Calu3 (cell line): ENCODE measurements at regions of chr5 and their contacts with region 1.

Region 1: GRCh38 chr5:175700991-175701390 is 43.1 kb downstream of the HRH2 start:
- DNase-seq: peak; percentile 30
- H3K4me3 Mint-ChIP-seq: no peak overlapping the region
- H3K27ac Mint-ChIP-seq: no peak overlapping the region
- H3K4me1 Mint-ChIP-seq: no peaks in the 10 kb centered on the region
- H3K27me3 Mint-ChIP-seq: peaks cover 70% of the 10 kb centered on the region
- CTCF ChIP-seq: no peak

Region 2: DNA sequence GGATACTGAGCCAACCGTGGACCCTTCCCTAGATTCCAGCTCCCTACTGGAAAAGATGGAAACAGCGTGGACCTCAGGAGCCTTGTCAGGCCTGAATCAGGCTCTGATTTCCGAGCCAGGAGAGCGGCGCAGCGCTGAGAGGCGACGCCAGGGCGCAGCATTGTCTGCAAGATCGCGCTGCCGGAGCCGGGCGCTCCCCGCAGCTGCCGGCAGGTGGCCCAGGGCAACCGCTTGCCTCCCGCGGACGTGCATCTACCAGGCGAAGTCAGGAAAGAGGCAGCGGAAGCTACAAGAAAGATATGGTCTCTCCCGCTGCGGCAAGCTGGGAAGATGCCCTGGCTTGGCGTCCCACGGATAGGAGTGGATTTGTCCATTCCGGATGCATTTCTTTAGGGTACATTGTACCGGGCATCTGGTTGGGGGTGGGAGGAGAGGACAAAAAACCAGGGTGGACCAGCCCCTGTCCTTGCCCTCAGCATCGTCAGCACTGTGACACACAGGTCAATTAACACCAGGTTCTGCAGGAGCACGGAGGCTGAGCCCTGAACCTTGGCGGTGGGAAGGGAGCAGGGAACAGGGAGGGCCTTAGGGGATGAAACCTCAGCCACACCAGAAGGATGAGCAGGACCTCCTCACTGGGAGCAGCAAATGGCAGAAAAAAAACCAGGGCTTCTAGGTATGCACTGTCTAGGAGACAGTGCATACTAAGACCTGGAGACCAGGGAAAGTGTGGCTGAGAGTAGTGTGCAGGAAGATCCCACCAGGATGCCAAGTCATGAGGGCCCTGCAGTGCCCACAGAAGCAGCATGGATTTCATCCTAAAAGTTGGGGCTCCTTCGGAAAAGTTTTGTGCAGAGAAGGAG is 166.7 kb before region 1 on chr5:
- CTCF ChIA-PET with region 1: interaction called, 9 read pairs
- intact Hi-C with region 1: loop called (anchors 5 kb)
- DNase-seq: peak; percentile 88
- H3K4me3 Mint-ChIP-seq: peak overlapping the region; percentile 30
- H3K27ac Mint-ChIP-seq: no peak overlapping the region
- H3K4me1 Mint-ChIP-seq: peaks cover 6% of the 10 kb centered on the region
- H3K27me3 Mint-ChIP-seq: peaks cover 12% of the 10 kb centered on the region
- CTCF ChIP-seq: peak; percentile 99

Region 3: GRCh38 chr5:175689147-175689991 is 11.6 kb before region 1 on chr5:
- CTCF ChIA-PET with region 1: no interaction called
- intact Hi-C with region 1: no loop called
- DNase-seq: no peak
- H3K4me3 Mint-ChIP-seq: no peak overlapping the region
- H3K27ac Mint-ChIP-seq: no peak overlapping the region
- H3K4me1 Mint-ChIP-seq: no peaks in the 10 kb centered on the region
- H3K27me3 Mint-ChIP-seq: peaks cover 80% of the 10 kb centered on the region
- CTCF ChIP-seq: no peak

Region 4: GRCh38 chr5:175718401-175719108 is 17.6 kb after region 1 on chr5:
- CTCF ChIA-PET with region 1: no interaction called
- intact Hi-C with region 1: no loop called
- DNase-seq: peak; percentile 56
- H3K4me3 Mint-ChIP-seq: no peak overlapping the region
- H3K27ac Mint-ChIP-seq: no peak overlapping the region
- H3K4me1 Mint-ChIP-seq: no peaks in the 10 kb centered on the region
- H3K27me3 Mint-ChIP-seq: peaks cover 35% of the 10 kb centered on the region
- CTCF ChIP-seq: peak; percentile 44

Region 5: GRCh38 chr5:175738602-175739133 is 37.7 kb after region 1 on chr5:
- CTCF ChIA-PET with region 1: no interaction called
- intact Hi-C with region 1: no loop called
- DNase-seq: no peak
- H3K4me3 Mint-ChIP-seq: no peak overlapping the region
- H3K27ac Mint-ChIP-seq: no peak overlapping the region
- H3K4me1 Mint-ChIP-seq: no peaks in the 10 kb centered on the region
- H3K27me3 Mint-ChIP-seq: peaks cover 100% of the 10 kb centered on the region
- CTCF ChIP-seq: no peak